PC-9 (cell line): ENCODE measurements at regions of chr6 and their contacts with region 1.

Region 1: GRCh38 chr6:159969921-159970320 is 1.0 kb downstream of the IGF2R start:
- DNase-seq: peak; percentile 24 to 39
- H3K4me3 ChIP-seq: peak overlapping the region; percentile 82
- H3K27ac ChIP-seq: no peak overlapping the region
- H3K4me1 ChIP-seq: peaks cover 32% of the 10 kb centered on the region
- H3K27me3 ChIP-seq: no peaks in the 10 kb centered on the region; the same call in 1 of the 2 replicates
- CTCF ChIP-seq: no peak

Region 2: DNA sequence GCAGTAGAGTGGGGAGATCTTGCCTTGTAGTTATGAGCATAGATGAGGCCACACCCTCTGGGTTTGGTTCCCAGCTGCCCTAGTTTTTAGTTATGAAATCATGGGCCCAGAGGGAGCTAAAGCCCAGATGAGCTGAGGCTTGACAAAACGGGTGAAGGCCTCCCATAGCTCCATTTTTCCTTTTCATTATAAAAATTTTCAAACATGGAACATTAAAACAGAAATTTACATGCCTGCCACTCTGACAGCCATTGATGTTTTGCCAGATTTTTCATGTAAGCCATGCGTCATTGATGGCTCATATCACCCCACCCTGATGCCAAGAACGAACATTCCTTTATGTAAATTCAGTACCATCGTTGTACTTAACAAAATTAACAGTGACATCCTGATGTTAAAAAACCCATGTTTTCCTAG is 66.9 kb after region 1 on chr6:
- CTCF ChIA-PET with region 1: no interaction called
- POLR2A ChIA-PET with region 1: no interaction called
- intact Hi-C with region 1: loop called (anchors 5 kb)
- DNase-seq: no peak
- H3K4me3 ChIP-seq: no peak overlapping the region
- H3K27ac ChIP-seq: no peak overlapping the region
- H3K4me1 ChIP-seq: no peaks in the 10 kb centered on the region
- H3K27me3 ChIP-seq: no peaks in the 10 kb centered on the region
- CTCF ChIP-seq: no peak